ENCODE measurements at regions of chr11 and their contacts with region 1.

Region 1: DNA sequence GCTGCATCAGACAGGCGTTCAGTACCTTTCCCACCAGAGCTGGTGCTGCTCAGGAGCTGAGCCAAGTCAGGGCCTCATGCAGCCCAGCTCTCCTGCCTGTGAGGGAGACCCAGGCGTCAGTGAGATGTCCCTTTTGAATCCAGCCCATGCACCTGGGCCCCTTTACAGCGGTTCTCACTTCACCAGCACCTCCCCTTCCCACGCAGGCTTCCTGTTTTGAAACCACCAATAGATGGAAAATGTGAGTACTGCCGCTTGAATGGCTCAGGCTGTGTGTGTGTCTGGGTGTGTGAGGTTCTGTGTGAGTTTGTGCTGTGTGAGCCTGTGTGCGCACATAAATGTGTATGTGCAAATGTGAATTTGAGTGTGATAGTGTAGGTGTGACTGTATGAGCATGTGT is 88.4 kb downstream of the UBASH3B start:
- DNase-seq: peak; percentile 95
- ATAC-seq: peak; percentile 72
- H3K4me3 Mint-ChIP-seq: no peak overlapping the region
- H3K27ac Mint-ChIP-seq: no peak overlapping the region
- H3K4me1 Mint-ChIP-seq: no peaks in the 10 kb centered on the region
- H3K27me3 Mint-ChIP-seq: no peaks in the 10 kb centered on the region
- CTCF ChIP-seq: no peak

Region 2: GRCh38 chr11:122478986-122479385 is 265.0 kb before region 1 on chr11:
- CTCF ChIA-PET with region 1: no interaction called
- POLR2A ChIA-PET with region 1: no interaction called
- intact Hi-C with region 1: no loop called
- DNase-seq: no peak
- ATAC-seq: no peak
- H3K4me3 Mint-ChIP-seq: no peak overlapping the region
- H3K27ac Mint-ChIP-seq: no peak overlapping the region
- H3K4me1 Mint-ChIP-seq: no peaks in the 10 kb centered on the region
- H3K27me3 Mint-ChIP-seq: peaks cover 11% of the 10 kb centered on the region
- CTCF ChIP-seq: no peak

Region 3: DNA sequence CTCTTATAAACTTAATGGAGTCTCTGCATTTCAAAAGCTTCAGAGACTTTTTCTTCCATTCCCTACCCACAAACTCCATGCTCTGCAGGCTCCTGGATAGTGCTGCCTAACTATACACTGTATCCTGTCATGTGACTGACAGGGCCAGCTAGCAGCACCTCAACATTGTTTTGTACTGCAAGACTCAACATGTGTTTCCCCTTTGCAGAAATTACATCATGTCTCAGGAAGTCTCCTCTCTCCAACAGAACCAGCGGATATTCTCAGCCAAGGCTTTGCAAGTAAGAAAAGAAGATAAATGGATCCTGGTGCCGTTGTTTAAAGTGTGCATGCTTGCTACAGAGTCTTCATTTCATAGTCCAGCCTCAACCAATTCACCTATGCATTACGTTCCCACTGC is 252.4 kb before region 1 on chr11:
- CTCF ChIA-PET with region 1: no interaction called
- POLR2A ChIA-PET with region 1: no interaction called
- intact Hi-C with region 1: no loop called
- DNase-seq: no peak
- ATAC-seq: no peak
- H3K4me3 Mint-ChIP-seq: no peak overlapping the region
- H3K27ac Mint-ChIP-seq: no peak overlapping the region
- H3K4me1 Mint-ChIP-seq: no peaks in the 10 kb centered on the region
- H3K27me3 Mint-ChIP-seq: peaks cover 5% of the 10 kb centered on the region
- CTCF ChIP-seq: no peak

Region 4: GRCh38 chr11:122556605-122557004 is 187.3 kb before region 1 on chr11:
- CTCF ChIA-PET with region 1: no interaction called
- POLR2A ChIA-PET with region 1: no interaction called
- intact Hi-C with region 1: no loop called
- DNase-seq: peak; percentile 19
- ATAC-seq: peak; percentile 37
- H3K4me3 Mint-ChIP-seq: no peak overlapping the region
- H3K27ac Mint-ChIP-seq: no peak overlapping the region
- H3K4me1 Mint-ChIP-seq: no peaks in the 10 kb centered on the region
- H3K27me3 Mint-ChIP-seq: peaks cover 14% of the 10 kb centered on the region
- CTCF ChIP-seq: no peak

Region 5: DNA sequence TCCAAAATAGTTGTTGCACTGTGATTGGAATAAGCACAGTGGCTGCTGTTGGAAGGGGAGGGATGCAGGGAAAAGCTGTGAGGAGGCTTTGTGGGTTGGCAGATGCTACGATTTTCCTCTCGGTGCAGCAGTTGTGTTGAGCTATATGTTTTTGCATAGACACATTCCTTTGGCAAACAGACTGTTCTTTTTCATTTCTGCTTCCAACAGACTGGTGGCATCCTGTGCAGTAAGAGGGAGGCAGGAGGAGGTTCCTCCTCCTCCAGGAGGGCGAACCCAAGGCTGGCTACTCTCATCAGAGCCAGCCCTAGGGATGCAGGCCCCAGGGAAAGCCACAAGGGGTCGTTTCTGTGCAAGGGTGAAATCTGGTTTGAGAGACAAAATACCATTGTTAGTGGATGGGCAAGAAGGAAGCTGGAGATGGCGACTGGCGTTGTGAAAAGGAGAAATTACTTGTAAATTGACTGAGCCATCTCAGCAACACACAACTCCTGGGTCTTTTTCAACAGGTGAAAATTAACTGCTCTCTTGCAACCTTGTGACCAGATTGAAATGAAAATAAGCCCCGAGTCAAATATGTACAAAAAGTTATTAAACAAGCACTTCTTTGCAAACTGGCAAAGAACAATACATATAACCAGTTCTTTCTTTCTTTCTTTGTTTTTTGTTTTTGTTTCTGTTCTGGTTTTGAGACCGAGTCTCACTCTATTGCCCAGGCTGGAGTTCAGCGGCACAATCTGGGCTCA is 115.0 kb before region 1 on chr11:
- CTCF ChIA-PET with region 1: interaction called, 17 read pairs
- POLR2A ChIA-PET with region 1: no interaction called
- intact Hi-C with region 1: no loop called
- DNase-seq: peak; percentile 83
- ATAC-seq: peak; percentile 96
- H3K4me3 Mint-ChIP-seq: no peak overlapping the region
- H3K27ac Mint-ChIP-seq: no peak overlapping the region
- H3K4me1 Mint-ChIP-seq: peaks cover 14% of the 10 kb centered on the region
- H3K27me3 Mint-ChIP-seq: no peaks in the 10 kb centered on the region
- CTCF ChIP-seq: peak; percentile 86

Region 6: GRCh38 chr11:122661182-122661945 is 82.6 kb before region 1 on chr11:
- CTCF ChIA-PET with region 1: interaction called, 33 read pairs
- POLR2A ChIA-PET with region 1: interaction called, 27 read pairs
- intact Hi-C with region 1: loop called (anchors 5 kb)
- DNase-seq: no peak
- ATAC-seq: no peak
- H3K4me3 Mint-ChIP-seq: no peak overlapping the region
- H3K27ac Mint-ChIP-seq: no peak overlapping the region
- H3K4me1 Mint-ChIP-seq: peaks cover 49% of the 10 kb centered on the region
- H3K27me3 Mint-ChIP-seq: no peaks in the 10 kb centered on the region
- CTCF ChIP-seq: no peak

Region 7: GRCh38 chr11:122717264-122717867 is 26.6 kb before region 1 on chr11:
- CTCF ChIA-PET with region 1: no interaction called
- POLR2A ChIA-PET with region 1: interaction called, 20 read pairs
- intact Hi-C with region 1: loop called (anchors 1 kb)
- DNase-seq: peak; percentile 93
- ATAC-seq: peak; percentile 83
- H3K4me3 Mint-ChIP-seq: peak overlapping the region; percentile 45
- H3K27ac Mint-ChIP-seq: peak overlapping the region; percentile 90
- H3K4me1 Mint-ChIP-seq: peaks cover 87% of the 10 kb centered on the region
- H3K27me3 Mint-ChIP-seq: no peaks in the 10 kb centered on the region
- CTCF ChIP-seq: no peak

Region 8: GRCh38 chr11:122733318-122733717 is 10.6 kb before region 1 on chr11:
- CTCF ChIA-PET with region 1: interaction called, 7 read pairs
- POLR2A ChIA-PET with region 1: interaction called, 38 read pairs
- intact Hi-C with region 1: no loop called
- DNase-seq: no peak
- ATAC-seq: no peak
- H3K4me3 Mint-ChIP-seq: no peak overlapping the region
- H3K27ac Mint-ChIP-seq: no peak overlapping the region
- H3K4me1 Mint-ChIP-seq: peaks cover 53% of the 10 kb centered on the region
- H3K27me3 Mint-ChIP-seq: no peaks in the 10 kb centered on the region
- CTCF ChIP-seq: no peak

Region 9: DNA sequence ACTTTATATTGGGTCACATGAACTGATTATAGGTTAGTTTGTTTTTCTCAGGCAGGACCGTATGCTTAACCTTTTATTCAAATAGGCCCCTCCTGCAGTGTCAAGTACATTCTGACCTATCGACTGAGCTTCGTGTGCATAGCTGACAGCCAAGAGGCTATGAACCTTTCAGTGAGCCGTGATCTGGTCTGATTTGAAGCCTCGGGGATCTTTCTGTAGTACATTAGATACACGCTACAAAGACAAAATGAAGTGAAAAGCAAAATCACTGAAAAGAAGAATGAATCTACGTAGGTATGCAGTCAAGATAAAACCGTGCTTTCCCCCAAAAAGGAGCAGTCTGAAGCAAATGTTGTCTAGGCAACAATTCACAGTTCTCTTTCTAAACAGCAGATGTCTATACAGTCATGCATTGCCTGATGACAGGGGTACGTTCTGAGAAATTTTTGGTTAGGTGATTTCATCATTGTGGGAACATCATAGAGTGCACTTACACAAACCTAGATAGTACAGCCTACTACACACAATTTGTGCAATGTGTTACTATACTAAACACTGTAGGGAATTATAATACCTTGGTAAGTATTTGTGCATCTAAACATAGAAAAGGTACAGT is 156.7 kb after region 1 on chr11:
- CTCF ChIA-PET with region 1: no interaction called
- POLR2A ChIA-PET with region 1: no interaction called
- intact Hi-C with region 1: no loop called
- DNase-seq: no peak
- ATAC-seq: peak; percentile 79
- H3K4me3 Mint-ChIP-seq: no peak overlapping the region
- H3K27ac Mint-ChIP-seq: no peak overlapping the region
- H3K4me1 Mint-ChIP-seq: no peaks in the 10 kb centered on the region
- H3K27me3 Mint-ChIP-seq: no peaks in the 10 kb centered on the region
- CTCF ChIP-seq: no peak

Measured in activated CD8-positive, alpha-beta T cell treated with anti-CD3 and anti-CD28 coated beads for 36 hours (primary cell).